H1 (cell line): ENCODE measurements at regions of chr14 and their contacts with region 1.

Region 1: GRCh38 chr14:69648477-69649451 is 37.4 kb downstream of the SUSD6 start:
- DNase-seq: no peak
- H3K4me3 ChIP-seq: no peak overlapping the region
- H3K27ac ChIP-seq: no peak overlapping the region
- H3K4me1 ChIP-seq: peaks cover 0 to 15% (median 10%) of the 10 kb centered on the region in 4 experiments; a peak in 6 of 7 replicates
- H3K27me3 ChIP-seq: no peaks in the 10 kb centered on the region
- CTCF ChIP-seq: no peak
- EP300 ChIP-seq: no peak
- POLR2A ChIP-seq: no peak
- RAD21 ChIP-seq: no peak

Region 2: GRCh38 chr14:69637503-69638030 is 11.2 kb before region 1 on chr14:
- CTCF ChIA-PET with region 1: interaction called, 12 read pairs
- POLR2A ChIA-PET with region 1: interaction called, 5 read pairs
- DNase-seq: no peak
- H3K4me3 ChIP-seq: peak overlapping the region in 1 of 4 experiments; percentile 21; a peak in 2 of 8 replicates
- H3K27ac ChIP-seq: no peak overlapping the region
- H3K4me1 ChIP-seq: peaks cover 21 to 34% (median 27%) of the 10 kb centered on the region in 4 experiments
- H3K27me3 ChIP-seq: no peaks in the 10 kb centered on the region
- CTCF ChIP-seq: no peak
- EP300 ChIP-seq: no peak
- POLR2A ChIP-seq: no peak
- RAD21 ChIP-seq: no peak